ENCODE measurements at regions of chr2 and their contacts with region 1.

Region 1: DNA sequence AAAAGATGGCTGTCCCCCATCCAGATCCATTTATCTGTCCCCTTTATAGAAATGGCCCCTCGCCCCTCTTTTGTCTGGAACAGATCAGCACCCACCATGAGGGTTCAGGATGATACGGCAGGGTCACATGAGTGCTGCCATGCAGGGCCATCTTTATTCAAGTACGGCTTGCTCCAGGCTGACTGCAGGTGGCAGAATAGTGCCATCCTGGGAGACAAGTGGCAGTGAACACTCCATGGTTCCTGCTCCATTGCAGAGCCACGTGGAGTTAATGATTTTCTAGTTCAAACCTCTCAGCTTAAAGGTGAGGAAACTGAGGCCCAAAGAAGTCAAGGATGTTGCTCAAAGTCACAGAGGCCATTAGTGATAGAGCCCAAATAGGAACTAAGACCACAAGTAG is 180.6 kb downstream of the CLIP4 start:
- DNase-seq: peak; percentile 54
- H3K4me3 ChIP-seq: no peak overlapping the region
- H3K27ac ChIP-seq: peak overlapping the region in 1 of 2 experiments; percentile 16; a peak in 1 of 4 replicates
- H3K4me1 ChIP-seq: no peaks in the 10 kb centered on the region; a peak in 2 of 4 replicates
- H3K27me3 ChIP-seq: no peaks in the 10 kb centered on the region
- CTCF ChIP-seq: peak; percentile 49
- EP300 ChIP-seq: no peak
- RAD21 ChIP-seq: peak; percentile 88

Region 2: DNA sequence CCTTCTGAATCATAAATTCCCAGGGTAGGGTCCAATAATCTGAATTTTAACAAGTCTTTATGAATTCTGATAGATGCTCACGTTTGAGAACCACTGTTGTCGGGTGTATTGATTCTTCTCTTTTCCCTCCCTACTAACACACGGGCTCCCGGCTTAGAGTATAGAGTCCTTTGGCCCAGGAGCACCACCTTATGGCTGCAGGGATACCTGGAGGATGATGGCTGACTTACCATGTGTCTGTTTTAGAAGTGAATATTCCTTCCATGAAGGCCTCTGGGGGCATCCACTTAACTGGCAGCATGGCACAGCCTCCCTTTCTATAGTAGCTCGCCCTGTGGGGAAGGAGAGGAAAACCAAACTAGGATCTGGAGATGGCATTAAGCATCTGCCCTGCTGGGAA is 88.9 kb before region 1 on chr2:
- CTCF ChIA-PET with region 1: no interaction called
- POLR2A ChIA-PET with region 1: no interaction called
- DNase-seq: no peak
- H3K4me3 ChIP-seq: no peak overlapping the region
- H3K27ac ChIP-seq: no peak overlapping the region
- H3K4me1 ChIP-seq: peaks cover 0 to 33% of the 10 kb centered on the region in 2 experiments; a peak in 2 of 4 replicates
- H3K27me3 ChIP-seq: no peaks in the 10 kb centered on the region
- CTCF ChIP-seq: no peak
- EP300 ChIP-seq: no peak
- RAD21 ChIP-seq: no peak

Region 3: DNA sequence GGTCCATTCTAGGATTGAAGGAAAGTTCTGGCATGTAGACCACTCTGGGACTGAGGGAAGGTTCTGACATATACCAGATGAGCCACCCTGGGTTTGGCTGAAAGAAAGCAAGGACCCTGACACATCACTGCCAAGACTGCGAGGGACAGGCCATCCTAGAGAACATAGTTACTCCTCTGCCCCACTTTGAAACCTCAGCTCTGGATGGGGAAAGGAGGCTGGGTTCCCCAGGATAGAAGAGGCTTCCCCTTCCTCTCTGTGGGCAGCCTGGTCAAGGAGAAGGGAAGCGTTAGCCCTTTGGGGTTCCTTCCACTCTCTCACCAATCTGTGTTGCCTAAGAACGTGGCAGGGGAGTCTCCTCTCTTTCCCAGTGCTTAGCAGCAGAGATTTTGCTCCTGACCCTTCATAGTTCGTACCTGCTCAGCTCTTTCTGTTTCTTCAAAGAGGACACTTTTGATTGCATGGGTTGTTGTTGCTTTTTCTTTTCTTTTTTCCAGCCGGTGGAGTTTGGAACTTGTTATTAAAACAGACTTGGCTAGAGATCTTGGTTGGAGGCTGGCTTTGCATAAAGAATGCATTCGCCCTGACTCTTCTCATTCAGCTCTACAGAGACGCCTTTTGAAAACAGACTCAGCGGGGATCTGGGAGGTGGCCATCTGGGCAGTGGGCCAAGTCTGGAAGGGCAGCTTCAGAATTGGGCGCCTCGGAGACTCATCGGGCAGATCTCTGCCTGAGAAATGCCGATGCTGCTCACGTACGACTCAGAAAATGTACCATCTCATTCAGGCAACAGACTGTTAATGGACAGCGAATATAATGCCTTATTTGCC is 14.6 kb before region 1 on chr2:
- CTCF ChIA-PET with region 1: interaction called, 10 read pairs
- POLR2A ChIA-PET with region 1: interaction called, 4 read pairs
- DNase-seq: peak; percentile 82
- H3K4me3 ChIP-seq: peak overlapping the region; percentile 21 to 22; a peak in 2 of 4 replicates
- H3K27ac ChIP-seq: peak overlapping the region in 1 of 2 experiments; percentile 97; a peak in 2 of 4 replicates
- H3K4me1 ChIP-seq: peaks cover 3 to 60% of the 10 kb centered on the region in 2 experiments; a peak in 3 of 4 replicates
- H3K27me3 ChIP-seq: peaks cover 7% of the 10 kb centered on the region; the same call in 1 of the 2 replicates
- CTCF ChIP-seq: no peak
- EP300 ChIP-seq: peak in 1 of 2 experiments; percentile 85; a peak in 2 of 4 replicates
- RAD21 ChIP-seq: peak; percentile 49